GM10248 (cell line): ENCODE measurements at regions of chr11 and their contacts with region 1.

Region 1: DNA sequence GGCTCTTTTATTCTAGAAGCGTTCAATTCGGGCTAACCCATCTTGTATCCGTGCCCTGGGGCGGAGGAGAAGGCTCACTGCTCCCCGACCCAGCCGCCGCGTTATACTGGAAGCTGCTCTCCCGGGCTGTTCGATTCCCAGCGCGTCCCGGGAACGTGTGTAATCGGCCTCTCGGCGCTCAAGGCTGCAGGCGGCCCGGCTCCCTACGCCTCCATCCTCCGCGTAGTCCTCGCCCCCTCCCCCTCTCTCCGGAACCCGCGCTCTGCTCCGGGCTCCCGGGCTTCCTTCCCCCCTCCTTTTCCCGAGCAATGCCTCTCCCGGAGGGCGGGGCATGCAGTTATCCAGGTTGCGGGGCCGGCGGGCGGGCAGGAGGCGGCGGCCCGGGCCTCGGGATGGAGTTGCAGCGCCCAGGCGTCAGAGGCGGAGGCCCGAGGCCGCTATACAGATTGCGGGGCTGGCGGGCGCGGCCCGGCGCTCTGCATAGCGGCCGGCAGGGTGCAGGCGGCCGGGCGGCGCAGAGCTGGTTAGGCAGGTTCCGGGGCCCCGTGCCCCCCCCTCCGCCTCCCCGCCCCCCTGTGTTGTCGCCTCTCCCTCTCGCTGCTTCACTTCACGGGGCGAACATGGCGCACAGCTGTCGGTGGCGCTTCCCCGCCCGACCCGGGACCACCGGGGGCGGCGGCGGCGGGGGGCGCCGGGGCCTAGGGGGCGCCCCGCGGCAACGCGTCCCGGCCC is at the start of gene KMT2A:
- DNase-seq: peak; percentile 93
- CTCF ChIP-seq: peak; percentile 100

Region 2: GRCh38 chr11:118366287-118366686 is 69.8 kb before region 1 on chr11:
- CTCF ChIA-PET with region 1: no interaction called
- POLR2A ChIA-PET with region 1: interaction called, 20 read pairs
- DNase-seq: no peak
- CTCF ChIP-seq: no peak